ENCODE measurements at regions of chr15 and their contacts with region 1.

Region 1: DNA sequence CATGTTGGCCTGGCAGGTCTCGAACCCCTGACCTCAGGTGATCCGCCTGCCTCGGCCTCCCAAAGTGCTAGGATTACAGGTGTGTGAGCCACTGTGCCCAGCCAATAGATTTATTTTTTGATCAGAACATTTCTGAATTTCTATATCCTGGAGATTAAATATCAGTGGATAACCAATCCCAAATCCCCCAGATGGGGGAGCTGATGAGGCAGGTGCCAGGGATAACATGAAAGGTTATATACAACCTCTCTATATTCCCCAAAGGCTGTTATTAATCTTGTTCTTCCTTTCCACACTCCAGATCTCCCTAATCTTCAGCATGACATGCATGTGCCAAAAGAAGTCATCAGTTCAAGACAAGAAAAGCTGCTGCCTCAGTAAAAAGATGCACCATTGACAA is 112.3 kb downstream of the WDR76 start:
- DNase-seq: no peak
- ATAC-seq: no peak
- H3K4me3 ChIP-seq: no peak overlapping the region
- H3K27ac ChIP-seq: no peak overlapping the region
- H3K4me1 ChIP-seq: no peaks in the 10 kb centered on the region
- H3K27me3 ChIP-seq: peaks cover 0 to under 1% (median 0%) of the 10 kb centered on the region in 9 donors
- CTCF ChIP-seq: peak in 6 of 12 donors; percentile 11 to 32 (median 28)
- POLR2A ChIP-seq: no peak

Region 2: DNA sequence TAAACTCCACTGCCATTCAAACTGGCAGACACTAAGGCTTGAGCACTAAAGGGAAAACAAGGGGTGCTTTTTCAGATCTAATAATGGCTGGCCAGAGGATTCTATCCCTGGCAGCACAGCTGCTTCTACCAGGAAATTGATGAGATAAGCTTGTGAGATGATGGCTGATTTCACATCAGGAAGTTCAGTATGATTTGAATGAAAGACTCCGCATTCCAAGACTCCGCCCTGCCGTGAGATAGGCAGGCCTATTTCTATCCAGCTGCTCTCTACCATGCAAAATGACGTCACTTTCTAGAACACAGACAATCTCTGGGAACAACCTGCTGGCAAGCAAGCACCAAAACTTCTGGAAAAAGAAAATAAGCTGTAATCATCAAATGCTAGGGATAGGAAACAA is 59.5 kb after region 1 on chr15:
- intact Hi-C with region 1: loop called in 1 of 10 experiments (anchors 10 kb)
- DNase-seq: peak in 4 of 5 donors; percentile 31 to 62 (median 48)
- ATAC-seq: peak; percentile 76 to 96 (median 92)
- H3K4me3 ChIP-seq: peak overlapping the region in 5 of 12 donors; percentile 1 to 27 (median 15)
- H3K27ac ChIP-seq: peak overlapping the region in 9 of 12 donors; percentile 4 to 54 (median 36)
- H3K4me1 ChIP-seq: peaks cover 0 to 23% (median 11%) of the 10 kb centered on the region in 12 donors
- H3K27me3 ChIP-seq: no peaks in the 10 kb centered on the region
- CTCF ChIP-seq: no peak
- POLR2A ChIP-seq: no peak

Measured in heart left ventricle (tissue), 16 donors.